A549 (cell line): ENCODE measurements at regions of chr5 and their contacts with region 1.

Region 1: DNA sequence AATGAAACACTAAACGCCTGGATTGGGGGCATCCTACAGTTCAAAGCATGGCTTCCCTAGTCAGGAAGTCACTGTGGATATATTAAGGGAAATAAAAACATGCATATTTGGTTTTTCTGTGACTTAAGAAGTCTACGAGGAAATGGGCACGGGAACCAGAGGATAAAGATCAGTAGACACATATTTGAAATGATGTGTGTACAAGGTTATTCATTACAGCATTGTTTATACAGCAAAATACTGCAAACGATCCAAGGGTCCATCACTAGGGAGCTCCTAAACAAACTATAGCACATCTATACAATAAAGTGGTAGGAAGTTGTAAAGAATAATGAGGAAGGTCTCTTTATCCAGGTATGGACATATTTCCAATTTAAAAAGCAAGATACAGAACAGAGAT is 71.8 kb downstream of the EFNA5 start:
- DNase-seq: peak in 1 of 2 experiments; percentile 62
- ATAC-seq: peak in 1 of 2 experiments; percentile 81; a peak in 3 of 6 replicates
- H3K4me3 ChIP-seq: no peak overlapping the region
- H3K27ac ChIP-seq: peak overlapping the region; percentile 8 to 9; a peak in 3 of 6 replicates
- H3K4me1 ChIP-seq: peaks cover 59% of the 10 kb centered on the region
- CTCF ChIP-seq: no peak
- EP300 ChIP-seq: no peak
- POLR2A ChIP-seq: no peak
- RAD21 ChIP-seq: no peak

Region 2: DNA sequence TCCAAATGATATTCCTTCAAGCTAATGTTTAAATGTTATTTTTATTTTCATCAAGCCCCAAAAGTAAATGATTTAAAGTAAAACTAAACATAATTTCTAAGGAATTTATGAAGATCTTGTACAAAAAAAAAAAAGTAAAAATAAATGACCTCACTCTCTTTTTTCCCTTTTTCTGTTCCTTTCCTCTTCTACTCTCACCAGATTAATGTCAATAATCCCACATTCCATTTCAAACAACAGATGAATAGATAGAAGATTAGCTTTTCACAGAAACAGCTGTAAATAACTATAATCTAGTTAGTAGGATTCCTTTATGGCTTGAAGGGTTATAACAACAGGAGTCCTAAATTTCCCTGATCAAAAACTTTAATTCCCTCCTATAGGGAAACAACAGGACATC is 16.3 kb before region 1 on chr5:
- CTCF ChIA-PET with region 1: no interaction called
- POLR2A ChIA-PET with region 1: no interaction called
- DNase-seq: no peak
- ATAC-seq: no peak
- H3K4me3 ChIP-seq: no peak overlapping the region
- H3K27ac ChIP-seq: no peak overlapping the region
- H3K4me1 ChIP-seq: peaks cover 36% of the 10 kb centered on the region
- CTCF ChIP-seq: no peak
- EP300 ChIP-seq: no peak
- POLR2A ChIP-seq: no peak
- RAD21 ChIP-seq: no peak

Region 3: DNA sequence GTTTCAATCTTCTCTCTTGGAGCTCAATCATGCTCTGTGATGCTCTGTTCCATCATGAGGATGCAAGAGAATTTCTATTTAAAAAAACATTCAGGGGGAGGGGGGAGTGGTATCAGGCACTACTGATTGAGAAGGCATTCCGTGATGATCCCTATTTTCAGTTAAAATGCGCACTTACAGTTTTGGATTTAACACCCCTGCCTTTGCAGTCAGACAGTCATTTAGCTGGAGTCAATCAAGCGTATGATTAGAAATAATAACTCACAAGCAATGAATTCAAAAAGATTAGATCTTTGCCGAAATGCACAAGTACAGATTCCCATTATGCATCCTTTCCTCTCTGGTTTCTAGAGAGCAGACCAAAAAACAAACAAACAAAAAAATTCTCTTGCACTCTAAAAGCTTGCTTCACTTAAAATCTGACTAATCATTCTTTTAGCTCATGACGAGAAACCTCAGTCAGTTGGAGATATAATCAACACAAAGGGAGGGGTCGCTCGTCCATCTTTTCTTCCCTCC is 16.4 kb after region 1 on chr5:
- CTCF ChIA-PET with region 1: interaction called, 10 read pairs
- POLR2A ChIA-PET with region 1: no interaction called
- DNase-seq: peak in 1 of 2 experiments; percentile 27
- ATAC-seq: peak in 1 of 2 experiments; percentile 39; a peak in 2 of 6 replicates
- H3K4me3 ChIP-seq: no peak overlapping the region
- H3K27ac ChIP-seq: 0 out of 6 replicates have a peak overlapping the region, but pooled peaks of 1 of the 2 experiments have one; percentile 3
- H3K4me1 ChIP-seq: peaks cover 82% of the 10 kb centered on the region
- CTCF ChIP-seq: no peak
- EP300 ChIP-seq: no peak
- POLR2A ChIP-seq: no peak
- RAD21 ChIP-seq: no peak

Region 4: DNA sequence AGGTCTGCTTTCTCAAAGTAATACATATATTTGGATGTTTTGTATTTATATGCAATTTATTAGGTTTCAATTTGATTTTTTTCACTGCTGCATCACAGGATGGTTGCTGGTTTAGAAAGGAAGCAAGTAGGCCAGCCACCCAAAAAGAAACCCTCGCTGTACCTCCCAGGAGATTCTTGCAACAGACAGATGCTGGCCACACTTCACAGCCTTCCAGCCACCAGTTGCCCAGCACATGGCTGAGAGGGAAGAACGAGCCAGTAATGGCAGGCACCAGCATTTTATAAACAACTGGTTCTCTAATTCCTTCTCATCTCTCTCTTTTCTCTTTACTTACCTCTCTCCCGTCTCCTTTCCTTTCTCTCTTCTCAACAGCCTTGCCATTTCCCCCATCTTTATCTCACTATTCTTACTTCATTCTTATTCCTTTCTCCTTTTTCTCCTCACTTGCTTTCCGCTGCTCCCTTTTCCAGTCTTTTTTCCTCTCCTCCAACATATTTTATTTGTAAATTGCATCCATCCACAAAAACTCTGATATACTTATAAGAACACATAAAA is 32.9 kb after region 1 on chr5:
- CTCF ChIA-PET with region 1: no interaction called
- POLR2A ChIA-PET with region 1: no interaction called
- DNase-seq: no peak
- ATAC-seq: 0 out of 6 replicates have a peak, but pooled peaks of 1 of the 2 experiments have one; percentile 18
- H3K4me3 ChIP-seq: no peak overlapping the region
- H3K27ac ChIP-seq: no peak overlapping the region
- H3K4me1 ChIP-seq: peaks cover 10% of the 10 kb centered on the region; the same call in 2 of the 3 replicates
- CTCF ChIP-seq: no peak
- EP300 ChIP-seq: no peak
- POLR2A ChIP-seq: no peak
- RAD21 ChIP-seq: no peak